B cell (primary cell): ENCODE measurements at regions of chr3 and their contacts with region 1.

Region 1: DNA sequence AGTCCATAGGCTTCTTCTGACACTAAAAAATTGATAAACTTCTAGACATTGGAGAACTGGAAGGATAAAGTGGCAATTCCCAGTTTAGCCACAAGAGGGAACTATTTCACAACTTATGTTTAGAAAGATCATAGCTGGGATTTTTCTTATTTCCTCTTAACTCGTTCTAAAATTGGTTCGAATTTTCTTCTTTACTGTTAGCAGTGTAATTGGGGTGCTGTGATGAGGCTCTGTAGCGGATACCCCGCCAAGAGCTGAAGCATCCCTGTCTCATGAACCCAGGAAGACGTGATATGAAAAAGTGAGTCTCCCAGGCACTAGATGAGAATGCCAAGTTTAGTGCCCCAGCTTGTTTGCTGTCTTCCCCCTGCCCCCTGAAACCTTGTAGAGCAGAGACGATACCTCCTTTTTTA is 85.1 kb downstream of the PDCD6IP start:
- DNase-seq: peak; percentile 60
- ATAC-seq: peak; percentile 31
- H3K4me3 ChIP-seq: no peak overlapping the region
- H3K4me3 Mint-ChIP-seq: peak overlapping the region; percentile 24
- H3K27ac ChIP-seq: no peak overlapping the region
- H3K27ac Mint-ChIP-seq: no peak overlapping the region
- H3K4me1 ChIP-seq: peaks cover 3 to 5% of the 10 kb centered on the region in 2 donors
- H3K4me1 Mint-ChIP-seq: peaks cover 4% of the 10 kb centered on the region
- H3K27me3 ChIP-seq: peaks cover 0 to 3% (median 0%) of the 10 kb centered on the region in 4 experiments
- H3K27me3 Mint-ChIP-seq: peaks cover 8% of the 10 kb centered on the region
- CTCF ChIP-seq: peak; percentile 97

Region 2: DNA sequence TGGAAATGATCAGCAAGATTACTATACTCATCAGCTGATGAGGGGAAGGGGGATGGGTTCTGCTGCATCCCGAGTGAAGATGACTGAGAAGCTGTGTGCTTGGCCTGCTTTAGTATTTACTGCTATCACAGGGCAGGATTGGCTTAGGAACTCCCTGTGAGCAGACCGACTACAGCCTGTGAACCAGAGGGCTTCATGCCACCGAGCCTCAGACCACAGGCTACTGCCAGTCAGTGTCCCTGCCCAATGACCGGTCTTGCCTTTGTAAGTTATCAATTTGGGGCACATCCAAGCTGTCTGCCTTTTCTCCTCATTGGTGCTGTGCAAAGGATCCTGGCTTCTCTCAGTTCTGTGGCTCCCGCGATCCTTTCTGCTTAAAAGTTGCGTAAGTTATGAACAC is 13.6 kb before region 1 on chr3:
- CTCF ChIA-PET with region 1: interaction called, 16 read pairs
- POLR2A ChIA-PET with region 1: no interaction called
- intact Hi-C with region 1: no loop called
- DNase-seq: no peak
- ATAC-seq: no peak
- H3K4me3 ChIP-seq: no peak overlapping the region
- H3K4me3 Mint-ChIP-seq: no peak overlapping the region
- H3K27ac ChIP-seq: no peak overlapping the region
- H3K27ac Mint-ChIP-seq: no peak overlapping the region
- H3K4me1 ChIP-seq: no peaks in the 10 kb centered on the region
- H3K4me1 Mint-ChIP-seq: no peaks in the 10 kb centered on the region
- H3K27me3 ChIP-seq: no peaks in the 10 kb centered on the region
- H3K27me3 Mint-ChIP-seq: no peaks in the 10 kb centered on the region
- CTCF ChIP-seq: no peak

Region 3: GRCh38 chr3:33898901-33899300 is 15.4 kb after region 1 on chr3:
- CTCF ChIA-PET with region 1: interaction called, 12 read pairs
- POLR2A ChIA-PET with region 1: no interaction called
- intact Hi-C with region 1: no loop called
- DNase-seq: no peak
- ATAC-seq: no peak
- H3K4me3 ChIP-seq: no peak overlapping the region
- H3K4me3 Mint-ChIP-seq: no peak overlapping the region
- H3K27ac ChIP-seq: no peak overlapping the region
- H3K27ac Mint-ChIP-seq: no peak overlapping the region
- H3K4me1 ChIP-seq: no peaks in the 10 kb centered on the region
- H3K4me1 Mint-ChIP-seq: no peaks in the 10 kb centered on the region
- H3K27me3 ChIP-seq: no peaks in the 10 kb centered on the region
- H3K27me3 Mint-ChIP-seq: peaks cover 4% of the 10 kb centered on the region
- CTCF ChIP-seq: no peak

Region 4: DNA sequence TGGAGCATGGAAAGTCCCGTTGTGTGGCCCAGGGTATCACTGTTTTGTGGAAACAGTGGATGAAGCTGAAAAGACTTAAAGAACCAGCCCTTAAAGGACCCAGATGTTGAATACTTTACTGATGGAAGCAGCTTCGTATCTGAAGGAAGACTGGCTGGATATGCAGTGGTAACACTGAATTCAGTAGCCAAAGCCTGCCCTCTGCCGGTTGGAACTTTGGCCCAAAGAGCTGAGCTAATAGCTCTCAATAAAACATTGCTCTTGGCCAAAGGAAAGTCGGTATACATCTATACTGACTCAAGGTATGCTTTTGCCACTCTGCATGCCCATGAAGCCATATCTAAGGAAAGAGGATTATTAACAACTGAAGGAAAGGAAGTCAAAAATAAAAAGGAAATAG is 800.3 kb after region 1 on chr3:
- CTCF ChIA-PET with region 1: interaction called, 68 read pairs
- POLR2A ChIA-PET with region 1: no interaction called
- intact Hi-C with region 1: no loop called
- DNase-seq: peak; percentile 41
- ATAC-seq: no peak
- H3K4me3 ChIP-seq: no peak overlapping the region
- H3K4me3 Mint-ChIP-seq: no peak overlapping the region
- H3K27ac ChIP-seq: no peak overlapping the region
- H3K27ac Mint-ChIP-seq: no peak overlapping the region
- H3K4me1 ChIP-seq: no peaks in the 10 kb centered on the region
- H3K4me1 Mint-ChIP-seq: no peaks in the 10 kb centered on the region
- H3K27me3 ChIP-seq: no peaks in the 10 kb centered on the region
- H3K27me3 Mint-ChIP-seq: no peaks in the 10 kb centered on the region
- CTCF ChIP-seq: peak; percentile 36

Region 5: DNA sequence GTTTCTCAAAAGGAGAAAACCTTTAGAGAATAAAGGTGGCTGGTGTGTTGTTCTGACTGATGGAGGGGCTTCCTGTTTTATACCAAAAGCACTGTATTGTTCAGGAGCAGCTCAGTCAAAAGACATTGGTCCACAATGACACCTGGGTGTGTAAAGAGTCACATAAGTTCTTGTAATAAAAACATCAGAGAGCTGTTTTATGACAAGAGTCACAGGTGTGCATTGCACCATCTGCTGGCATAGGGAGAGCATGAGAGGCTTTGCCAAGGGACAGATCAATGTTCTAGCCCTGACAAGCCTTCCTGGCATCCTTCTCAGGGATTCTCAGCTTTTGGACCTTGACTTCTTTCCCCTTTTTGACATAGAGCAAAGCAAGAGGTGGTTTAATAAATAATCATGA is 1776.2 kb after region 1 on chr3:
- CTCF ChIA-PET with region 1: no interaction called
- POLR2A ChIA-PET with region 1: no interaction called
- intact Hi-C with region 1: loop called (anchors 5 kb)
- DNase-seq: no peak
- ATAC-seq: no peak
- H3K4me3 ChIP-seq: no peak overlapping the region
- H3K4me3 Mint-ChIP-seq: no peak overlapping the region
- H3K27ac ChIP-seq: no peak overlapping the region
- H3K27ac Mint-ChIP-seq: no peak overlapping the region
- H3K4me1 ChIP-seq: peaks cover 3 to 4% of the 10 kb centered on the region in 2 donors
- H3K4me1 Mint-ChIP-seq: peaks cover 3% of the 10 kb centered on the region
- H3K27me3 ChIP-seq: no peaks in the 10 kb centered on the region
- H3K27me3 Mint-ChIP-seq: peaks cover 7% of the 10 kb centered on the region
- CTCF ChIP-seq: no peak